ENCODE measurements at regions of chr11 and their contacts with region 1.

Region 1: DNA sequence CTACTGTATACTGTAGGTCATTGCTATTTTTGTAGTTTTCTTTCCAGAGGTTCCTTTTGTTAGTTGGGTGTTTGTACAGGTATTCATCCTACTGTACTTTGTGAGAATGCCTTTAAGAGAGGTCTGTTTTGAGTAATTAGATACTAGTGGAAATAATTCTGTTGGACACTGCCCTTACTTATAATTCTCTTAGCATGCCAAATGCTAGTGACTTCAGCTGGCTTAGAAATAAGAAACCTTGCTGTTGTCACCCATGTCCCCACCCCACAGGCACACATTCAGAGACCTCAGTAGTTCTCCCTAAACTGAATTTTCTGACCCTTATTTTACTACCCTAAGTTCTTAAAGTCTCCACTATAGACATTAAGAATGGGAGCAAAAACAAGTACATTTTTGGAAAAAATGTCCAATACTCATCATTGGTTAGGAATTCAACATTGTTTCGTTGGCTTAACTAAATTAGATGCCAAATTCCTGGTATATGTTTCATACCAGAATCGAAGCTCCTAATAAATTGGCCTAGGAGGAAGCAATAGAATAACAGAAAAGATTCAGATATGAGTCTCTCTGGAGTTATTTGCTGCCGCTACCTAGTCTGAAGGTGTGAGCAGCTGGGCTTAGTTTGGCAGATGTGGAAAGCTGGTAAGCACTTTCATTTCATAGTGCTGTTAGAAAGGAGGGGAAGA is 28.4 kb downstream of the ZNF143 start:
- DNase-seq: no peak
- ATAC-seq: no peak
- H3K4me3 Mint-ChIP-seq: no peak overlapping the region
- H3K27ac Mint-ChIP-seq: no peak overlapping the region
- H3K4me1 Mint-ChIP-seq: no peaks in the 10 kb centered on the region
- H3K27me3 Mint-ChIP-seq: no peaks in the 10 kb centered on the region
- CTCF ChIP-seq: no peak

Region 2: GRCh38 chr11:9473408-9473807 is 15.8 kb before region 1 on chr11:
- CTCF ChIA-PET with region 1: no interaction called
- POLR2A ChIA-PET with region 1: interaction called, 3 read pairs
- intact Hi-C with region 1: loop called (anchors 2 kb)
- DNase-seq: no peak
- ATAC-seq: no peak
- H3K4me3 Mint-ChIP-seq: no peak overlapping the region
- H3K27ac Mint-ChIP-seq: no peak overlapping the region
- H3K4me1 Mint-ChIP-seq: no peaks in the 10 kb centered on the region
- H3K27me3 Mint-ChIP-seq: no peaks in the 10 kb centered on the region
- CTCF ChIP-seq: no peak

Measured in activated B cell treated with CpG ODN at 0.5 μM for 24 hours (primary cell).